CD4-positive, alpha-beta T cell (primary cell): ENCODE measurements at regions of chr4 and their contacts with region 1.

Region 1: GRCh38 chr4:147866532-147867271 is 134.8 kb downstream of the ARHGAP10 start:
- DNase-seq: peak; percentile 83 to 97 (median 92)
- ATAC-seq: peak; percentile 99
- H3K4me3 ChIP-seq: no peak overlapping the region
- H3K4me3 Mint-ChIP-seq: no peak overlapping the region
- H3K27ac ChIP-seq: no peak overlapping the region
- H3K27ac Mint-ChIP-seq: no peak overlapping the region
- H3K4me1 ChIP-seq: no peaks in the 10 kb centered on the region
- H3K4me1 Mint-ChIP-seq: no peaks in the 10 kb centered on the region
- H3K27me3 ChIP-seq: no peaks in the 10 kb centered on the region
- H3K27me3 Mint-ChIP-seq: no peaks in the 10 kb centered on the region
- CTCF ChIP-seq: peak; percentile 100

Region 2: GRCh38 chr4:147160908-147161513 is 705.7 kb before region 1 on chr4:
- CTCF ChIA-PET with region 1: interaction called, 3 read pairs
- POLR2A ChIA-PET with region 1: no interaction called
- intact Hi-C with region 1: loop called in 1 of 2 experiments (anchors 2 kb)
- DNase-seq: peak in 3 of 14 experiments; percentile 5 to 19 (median 13)
- ATAC-seq: no peak
- H3K4me3 ChIP-seq: no peak overlapping the region
- H3K4me3 Mint-ChIP-seq: no peak overlapping the region
- H3K27ac ChIP-seq: no peak overlapping the region
- H3K27ac Mint-ChIP-seq: no peak overlapping the region
- H3K4me1 ChIP-seq: no peaks in the 10 kb centered on the region
- H3K4me1 Mint-ChIP-seq: no peaks in the 10 kb centered on the region
- H3K27me3 ChIP-seq: peaks cover 11 to 23% of the 10 kb centered on the region in 2 experiments
- H3K27me3 Mint-ChIP-seq: peaks cover 37% of the 10 kb centered on the region
- CTCF ChIP-seq: peak; percentile 44

Region 3: DNA sequence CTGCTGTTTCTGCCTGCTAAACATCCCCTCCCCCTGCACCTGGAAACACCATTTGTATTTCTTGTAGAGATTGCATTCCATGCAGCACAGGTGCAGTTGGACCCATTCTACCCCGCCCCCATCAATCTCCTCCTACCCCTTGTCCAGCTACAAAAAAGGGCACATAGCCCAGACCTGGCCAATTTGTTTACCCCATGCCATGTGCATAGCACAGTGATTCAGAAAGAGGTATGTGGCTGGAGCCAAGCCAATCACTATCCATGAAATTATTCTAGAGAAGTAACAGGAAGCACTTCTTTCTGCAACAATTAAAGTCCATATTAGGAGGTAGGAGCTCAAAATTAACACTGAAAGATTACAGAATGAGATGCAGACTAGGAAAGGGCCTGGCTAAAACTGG is 269.7 kb before region 1 on chr4:
- CTCF ChIA-PET with region 1: interaction called, 3 read pairs
- POLR2A ChIA-PET with region 1: no interaction called
- intact Hi-C with region 1: loop called (anchors 1 to 5 kb)
- DNase-seq: no peak
- ATAC-seq: no peak
- H3K4me3 ChIP-seq: no peak overlapping the region
- H3K4me3 Mint-ChIP-seq: no peak overlapping the region
- H3K27ac ChIP-seq: no peak overlapping the region
- H3K27ac Mint-ChIP-seq: no peak overlapping the region
- H3K4me1 ChIP-seq: peaks cover 6% of the 10 kb centered on the region
- H3K4me1 Mint-ChIP-seq: no peaks in the 10 kb centered on the region
- H3K27me3 ChIP-seq: peaks cover 0 to 3% of the 10 kb centered on the region in 2 experiments
- H3K27me3 Mint-ChIP-seq: peaks cover 4% of the 10 kb centered on the region
- CTCF ChIP-seq: no peak

Region 4: GRCh38 chr4:147707865-147708672 is 158.6 kb before region 1 on chr4:
- CTCF ChIA-PET with region 1: interaction called, 37 read pairs
- POLR2A ChIA-PET with region 1: interaction called, 3 read pairs
- intact Hi-C with region 1: loop called (anchors 1 kb)
- DNase-seq: peak; percentile 23 to 77 (median 40)
- ATAC-seq: peak; percentile 71
- H3K4me3 ChIP-seq: no peak overlapping the region
- H3K4me3 Mint-ChIP-seq: no peak overlapping the region
- H3K27ac ChIP-seq: no peak overlapping the region
- H3K27ac Mint-ChIP-seq: no peak overlapping the region
- H3K4me1 ChIP-seq: no peaks in the 10 kb centered on the region
- H3K4me1 Mint-ChIP-seq: no peaks in the 10 kb centered on the region
- H3K27me3 ChIP-seq: no peaks in the 10 kb centered on the region
- H3K27me3 Mint-ChIP-seq: no peaks in the 10 kb centered on the region
- CTCF ChIP-seq: peak; percentile 97

Region 5: GRCh38 chr4:147879676-147880075 is 13.0 kb after region 1 on chr4:
- CTCF ChIA-PET with region 1: interaction called, 14 read pairs
- POLR2A ChIA-PET with region 1: interaction called, 4 read pairs
- intact Hi-C with region 1: no loop called
- DNase-seq: no peak
- ATAC-seq: no peak
- H3K4me3 ChIP-seq: no peak overlapping the region
- H3K4me3 Mint-ChIP-seq: no peak overlapping the region
- H3K27ac ChIP-seq: no peak overlapping the region
- H3K27ac Mint-ChIP-seq: no peak overlapping the region
- H3K4me1 ChIP-seq: no peaks in the 10 kb centered on the region
- H3K4me1 Mint-ChIP-seq: no peaks in the 10 kb centered on the region
- H3K27me3 ChIP-seq: no peaks in the 10 kb centered on the region
- H3K27me3 Mint-ChIP-seq: no peaks in the 10 kb centered on the region
- CTCF ChIP-seq: no peak

Region 6: DNA sequence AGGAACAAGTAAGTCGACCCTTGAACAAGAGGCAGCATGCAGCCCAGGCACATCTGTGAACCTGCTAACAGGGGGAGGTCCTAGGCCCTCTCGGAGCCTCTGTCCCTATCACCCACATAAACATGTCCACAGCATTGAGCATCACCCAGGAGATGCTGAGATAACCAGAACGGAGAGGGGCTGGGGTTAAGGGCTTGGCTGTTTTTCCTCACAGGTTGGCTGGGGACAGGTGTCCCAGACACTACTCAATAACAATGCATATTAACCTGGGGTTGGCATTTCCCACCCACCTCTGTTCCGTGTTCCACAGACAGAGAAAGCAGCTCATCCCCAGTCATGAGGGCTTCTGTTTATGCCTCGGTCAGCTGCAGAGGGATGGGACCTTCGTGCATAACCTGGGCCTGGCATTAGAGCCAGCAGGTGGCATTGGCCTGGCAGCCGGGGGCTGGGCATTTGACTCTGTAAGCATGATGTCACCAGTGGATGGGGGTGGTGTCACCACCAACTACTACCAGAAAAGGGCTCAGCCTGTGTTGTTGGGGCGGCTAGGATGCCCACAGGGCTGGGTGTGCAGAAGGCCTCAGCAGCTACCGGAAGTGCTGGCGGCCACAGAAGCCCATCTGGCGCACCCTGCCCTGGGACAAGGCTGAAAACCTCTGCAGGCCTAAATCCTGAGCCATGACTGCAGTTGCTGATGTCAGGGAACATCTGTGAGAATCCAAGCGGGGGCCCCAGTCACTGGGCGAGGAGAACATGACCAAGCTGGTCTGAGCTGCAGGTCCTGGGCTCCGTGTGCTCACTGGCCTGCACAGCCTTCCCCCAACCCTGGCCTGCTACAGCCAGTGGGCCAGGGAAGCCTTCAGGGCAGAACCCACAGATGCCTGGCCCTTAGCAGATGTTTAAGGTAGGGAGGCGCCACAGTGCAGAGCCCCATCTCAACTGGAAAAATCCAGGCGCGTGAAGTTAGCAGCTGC is 224.1 kb after region 1 on chr4:
- CTCF ChIA-PET with region 1: no interaction called
- POLR2A ChIA-PET with region 1: no interaction called
- intact Hi-C with region 1: no loop called
- DNase-seq: no peak
- ATAC-seq: no peak
- H3K4me3 ChIP-seq: no peak overlapping the region
- H3K4me3 Mint-ChIP-seq: no peak overlapping the region
- H3K27ac ChIP-seq: no peak overlapping the region
- H3K27ac Mint-ChIP-seq: no peak overlapping the region
- H3K4me1 ChIP-seq: no peaks in the 10 kb centered on the region
- H3K4me1 Mint-ChIP-seq: peaks cover 33% of the 10 kb centered on the region
- H3K27me3 ChIP-seq: no peaks in the 10 kb centered on the region
- H3K27me3 Mint-ChIP-seq: no peaks in the 10 kb centered on the region
- CTCF ChIP-seq: no peak